ENCODE measurements at regions of chr1 and their contacts with region 1.

Region 1: GRCh38 chr1:27603681-27604578 is at the start of gene AHDC1:
- H3K4me3 ChIP-seq: peak within 1 kb of the TSS; percentile 69
- H3K27ac ChIP-seq: peak within 1 kb of the TSS; percentile 72
- H3K4me1 ChIP-seq: peaks cover 20% of the 10 kb centered on the region
- CTCF ChIP-seq: 0 out of 2 replicates have a peak, but pooled peaks have one; percentile 19

Region 2: DNA sequence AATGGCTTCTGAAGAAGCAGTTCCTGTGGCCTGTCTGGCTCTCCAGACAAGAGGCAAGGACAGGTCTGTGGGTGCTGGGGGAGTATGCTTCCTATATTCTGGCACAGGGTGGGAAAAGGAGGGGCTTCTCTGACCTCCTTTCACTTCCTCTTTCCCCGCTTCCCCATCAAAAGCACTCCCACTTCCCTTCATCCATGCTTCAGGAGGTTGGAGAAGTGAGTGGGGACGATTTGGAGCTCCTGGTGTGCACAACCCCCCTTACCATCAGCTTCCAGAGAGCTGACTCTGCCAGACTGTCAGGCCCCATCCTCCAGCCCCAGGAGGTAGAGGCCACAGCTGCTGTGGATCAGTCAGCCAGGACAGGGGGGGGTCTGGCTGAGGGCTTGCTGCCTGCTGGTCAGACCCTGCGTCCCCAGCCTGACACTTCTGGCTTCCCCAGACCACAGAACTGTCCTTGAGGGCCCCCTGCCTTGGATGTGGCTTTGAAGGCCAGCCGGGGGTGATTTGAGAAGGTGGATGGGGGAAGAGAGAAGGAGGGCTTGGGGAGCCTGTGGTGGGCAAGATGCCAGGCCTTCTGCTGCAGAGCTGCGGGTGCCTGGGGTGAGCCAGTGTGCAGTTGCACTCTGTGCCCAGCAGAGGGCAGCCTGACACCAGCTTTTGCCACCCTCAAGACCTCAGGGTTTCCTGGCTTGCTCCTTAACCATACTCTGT is 303.4 kb before region 1 on chr1:
- CTCF ChIA-PET with region 1: interaction called, 36 read pairs
- POLR2A ChIA-PET with region 1: no interaction called
- H3K4me3 ChIP-seq: no peak overlapping the region
- H3K27ac ChIP-seq: no peak overlapping the region
- H3K4me1 ChIP-seq: no peaks in the 10 kb centered on the region
- CTCF ChIP-seq: peak; percentile 92

Region 3: DNA sequence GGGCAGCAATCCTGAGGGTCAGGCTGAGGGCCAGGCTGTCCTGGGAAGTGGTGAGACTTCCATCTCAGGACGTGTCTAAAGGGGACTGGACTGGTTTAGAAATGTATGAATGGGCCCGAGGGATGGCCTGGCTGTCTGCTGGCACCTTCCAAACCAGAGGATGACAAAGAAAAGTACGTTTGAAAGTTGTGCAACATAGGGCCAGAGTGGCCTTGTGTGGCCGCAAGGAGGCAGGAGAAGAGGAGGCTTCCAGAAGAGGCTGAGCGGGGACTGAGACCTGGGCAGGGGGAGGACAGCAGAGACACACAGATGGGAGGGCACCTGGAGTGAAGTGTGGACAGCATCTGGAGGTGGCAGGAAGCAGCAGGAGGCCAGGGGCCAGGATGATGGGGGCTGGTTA is 264.7 kb before region 1 on chr1:
- CTCF ChIA-PET with region 1: no interaction called
- POLR2A ChIA-PET with region 1: no interaction called
- H3K4me3 ChIP-seq: no peak overlapping the region
- H3K27ac ChIP-seq: no peak overlapping the region
- H3K4me1 ChIP-seq: peaks cover 3% of the 10 kb centered on the region; the same call in 1 of the 2 replicates
- CTCF ChIP-seq: no peak

Region 4: GRCh38 chr1:27402349-27402754 is 201.6 kb before region 1 on chr1:
- CTCF ChIA-PET with region 1: interaction called, 24 read pairs
- POLR2A ChIA-PET with region 1: no interaction called
- H3K4me3 ChIP-seq: no peak overlapping the region
- H3K27ac ChIP-seq: no peak overlapping the region
- H3K4me1 ChIP-seq: no peaks in the 10 kb centered on the region
- CTCF ChIP-seq: peak; percentile 38; the same call in 1 of the 2 replicates

Region 5: GRCh38 chr1:27489910-27490741 is 113.8 kb before region 1 on chr1 and contains the start of gene WASF2:
- CTCF ChIA-PET with region 1: interaction called, 9 read pairs
- POLR2A ChIA-PET with region 1: interaction called, 16 read pairs
- H3K4me3 ChIP-seq: peak within 1 kb of the TSS; percentile 86
- H3K27ac ChIP-seq: peak within 1 kb of the TSS; percentile 81
- H3K4me1 ChIP-seq: peaks cover 3% of the 10 kb centered on the region; the same call in 1 of the 2 replicates
- CTCF ChIP-seq: peak; percentile 54; the same call in 1 of the 2 replicates

Region 6: DNA sequence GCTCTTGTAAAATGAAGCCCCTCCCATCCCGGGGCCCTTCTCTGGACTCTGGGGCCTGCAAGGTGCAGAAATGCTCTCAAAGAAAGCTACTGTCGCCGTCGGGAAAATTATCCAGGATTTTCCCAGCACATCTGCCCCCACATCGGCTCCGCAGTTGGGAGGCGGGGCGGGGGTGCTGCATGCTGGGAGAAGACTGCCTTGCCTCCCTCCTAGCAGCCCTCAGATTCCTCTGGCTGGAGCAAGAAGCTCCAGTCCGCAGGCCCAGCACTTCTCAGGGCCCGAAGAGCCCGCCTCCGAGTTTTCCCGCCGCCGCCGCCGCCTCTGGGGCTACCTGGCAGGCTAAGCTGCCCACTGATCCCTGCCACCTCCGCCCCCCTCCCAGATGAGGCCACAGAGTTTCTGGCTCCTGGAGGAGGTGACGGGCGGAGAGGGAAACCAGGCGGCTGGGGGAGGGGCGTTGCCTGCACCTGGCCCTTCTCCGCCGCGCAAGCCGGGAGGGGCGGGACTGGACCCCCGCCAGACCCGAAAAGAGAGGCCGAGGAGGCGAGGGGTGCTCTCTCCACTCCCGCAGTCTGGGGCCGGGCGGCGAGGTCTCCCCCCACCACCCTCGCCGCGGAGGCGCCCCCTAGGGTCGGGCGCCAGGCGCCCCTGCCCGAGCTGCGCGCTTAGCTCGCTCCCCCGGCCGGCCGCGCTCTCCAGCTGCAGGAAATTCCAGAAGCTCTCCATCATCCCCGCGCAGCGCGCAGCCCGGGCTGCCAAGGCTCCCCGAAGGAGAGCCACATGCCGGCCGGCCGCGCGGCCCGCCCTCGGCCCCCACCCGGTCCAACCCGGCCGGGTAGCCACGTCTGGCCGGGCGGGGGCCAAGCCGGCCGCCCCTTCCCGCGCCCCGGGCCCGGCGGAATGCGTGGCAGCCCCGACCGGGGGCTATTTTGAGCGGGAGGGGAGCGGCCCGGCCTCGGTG is 28.8 kb before region 1 on chr1:
- CTCF ChIA-PET with region 1: interaction called, 22 read pairs
- POLR2A ChIA-PET with region 1: interaction called, 12 read pairs
- H3K4me3 ChIP-seq: peak overlapping the region; percentile 36
- H3K27ac ChIP-seq: peak overlapping the region; percentile 53
- H3K4me1 ChIP-seq: peaks cover 9% of the 10 kb centered on the region
- CTCF ChIP-seq: peak; percentile 93

Region 7: GRCh38 chr1:27656157-27656893 is 52.4 kb after region 1 on chr1:
- CTCF ChIA-PET with region 1: interaction called, 317 read pairs
- POLR2A ChIA-PET with region 1: interaction called, 6 read pairs
- H3K4me3 ChIP-seq: no peak overlapping the region
- H3K27ac ChIP-seq: no peak overlapping the region
- H3K4me1 ChIP-seq: no peaks in the 10 kb centered on the region
- CTCF ChIP-seq: no peak